ENCODE measurements at regions of chr6 and their contacts with region 1.

Region 1: GRCh38 chr6:12289933-12290820 is at the start of gene EDN1:
- DNase-seq: peak; percentile 84
- H3K4me3 ChIP-seq: peak within 1 kb of the TSS; percentile 28 to 30
- H3K27ac ChIP-seq: peak within 1 kb of the TSS; percentile 59 to 66
- H3K4me1 ChIP-seq: no peaks in the 10 kb centered on the region
- H3K27me3 ChIP-seq: no peaks in the 10 kb centered on the region
- CTCF ChIP-seq: peak in 3 of 4 experiments; percentile 13 to 59 (median 55)
- POLR2A ChIP-seq: peak; percentile 62
- total RNA-seq, gene EDN1: 15.6 to 20.4 TPM

Region 2: GRCh38 chr6:12208190-12208589 is 82.0 kb before region 1 on chr6:
- intact Hi-C with region 1: no loop called
- DNase-seq: no peak
- H3K4me3 ChIP-seq: no peak overlapping the region
- H3K27ac ChIP-seq: no peak overlapping the region
- H3K4me1 ChIP-seq: no peaks in the 10 kb centered on the region
- H3K27me3 ChIP-seq: no peaks in the 10 kb centered on the region
- CTCF ChIP-seq: no peak
- POLR2A ChIP-seq: no peak

Region 3: DNA sequence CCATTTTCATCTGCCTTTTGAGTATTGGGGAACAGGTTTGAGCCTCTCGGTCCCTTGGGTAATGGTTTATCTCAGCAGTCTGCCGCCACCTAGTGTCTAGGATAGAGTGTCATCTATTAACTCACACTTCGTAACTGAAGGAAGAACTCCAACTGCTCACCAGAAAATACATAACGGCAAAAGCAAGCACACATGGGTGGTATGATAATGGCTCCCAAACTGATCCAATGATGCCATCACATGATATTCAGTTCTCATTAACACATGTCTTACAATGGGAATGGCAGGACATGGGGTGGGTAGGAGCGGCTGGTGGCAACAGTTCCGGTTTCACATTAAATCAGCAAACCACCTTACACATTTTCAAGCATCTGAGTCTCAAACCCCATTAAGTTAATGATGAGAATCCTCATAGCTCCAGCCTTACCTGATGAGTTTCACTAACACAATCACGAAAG is 315.7 kb after region 1 on chr6:
- intact Hi-C with region 1: loop called (anchors 2 kb)
- DNase-seq: peak; percentile 67
- H3K4me3 ChIP-seq: no peak overlapping the region
- H3K27ac ChIP-seq: no peak overlapping the region
- H3K4me1 ChIP-seq: no peaks in the 10 kb centered on the region
- H3K27me3 ChIP-seq: no peaks in the 10 kb centered on the region
- CTCF ChIP-seq: peak; percentile 35 to 75 (median 57)
- POLR2A ChIP-seq: no peak

Measured in prostate gland (tissue), 2 donors.